ENCODE measurements at regions of chrX and their contacts with region 1.

Region 1: GRCh38 chrX:74009041-74009440 is 294.9 kb upstream of the ZCCHC13 start:
- DNase-seq: no peak
- ATAC-seq: no peak
- H3K4me3 ChIP-seq: no peak overlapping the region
- H3K4me3 Mint-ChIP-seq: no peak overlapping the region
- H3K27ac ChIP-seq: no peak overlapping the region
- H3K27ac Mint-ChIP-seq: peak overlapping the region in 1 of 2 donors; percentile 36
- H3K4me1 ChIP-seq: no peaks in the 10 kb centered on the region
- H3K4me1 Mint-ChIP-seq: no peaks in the 10 kb centered on the region
- H3K27me3 ChIP-seq: no peaks in the 10 kb centered on the region
- H3K27me3 Mint-ChIP-seq: no peaks in the 10 kb centered on the region
- CTCF ChIP-seq: no peak

Region 2: DNA sequence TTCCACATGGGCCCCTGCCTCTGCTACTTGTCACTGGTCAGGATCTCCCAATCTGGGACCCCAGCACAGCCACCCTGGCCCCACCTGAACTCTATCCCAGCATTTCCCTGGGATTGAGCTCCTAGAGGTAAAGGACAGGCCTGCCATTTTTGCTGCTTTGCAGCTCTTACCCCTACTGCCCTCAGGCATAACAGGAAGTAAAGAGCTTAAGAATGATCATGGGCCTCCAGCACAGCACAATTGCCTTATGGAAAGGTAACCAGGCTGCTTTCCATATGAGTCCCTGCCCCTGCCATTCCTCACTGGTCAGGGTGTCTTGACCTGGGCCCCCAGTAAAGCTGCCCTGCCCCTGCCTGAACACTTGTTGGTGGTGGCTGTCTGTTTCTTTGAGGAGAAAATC is 40.1 kb after region 1 on chrX:
- intact Hi-C with region 1: loop called (anchors 2 kb)
- DNase-seq: no peak
- ATAC-seq: no peak
- H3K4me3 ChIP-seq: no peak overlapping the region
- H3K4me3 Mint-ChIP-seq: no peak overlapping the region
- H3K27ac ChIP-seq: no peak overlapping the region
- H3K27ac Mint-ChIP-seq: no peak overlapping the region
- H3K4me1 ChIP-seq: no peaks in the 10 kb centered on the region
- H3K4me1 Mint-ChIP-seq: no peaks in the 10 kb centered on the region
- H3K27me3 ChIP-seq: no peaks in the 10 kb centered on the region
- H3K27me3 Mint-ChIP-seq: no peaks in the 10 kb centered on the region
- CTCF ChIP-seq: no peak